ENCODE measurements at regions of chr4 and their contacts with region 1.

Region 1: GRCh38 chr4:183471946-183472708 is 27.7 kb downstream of the CDKN2AIP start:
- DNase-seq: peak; percentile 77
- ATAC-seq: peak; percentile 53
- H3K4me3 ChIP-seq: no peak overlapping the region
- H3K4me3 Mint-ChIP-seq: no peak overlapping the region
- H3K27ac ChIP-seq: no peak overlapping the region
- H3K27ac Mint-ChIP-seq: no peak overlapping the region
- H3K4me1 ChIP-seq: no peaks in the 10 kb centered on the region
- H3K4me1 Mint-ChIP-seq: peaks cover 5% of the 10 kb centered on the region
- H3K27me3 ChIP-seq: no peaks in the 10 kb centered on the region
- H3K27me3 Mint-ChIP-seq: no peaks in the 10 kb centered on the region
- CTCF ChIP-seq: peak; percentile 97

Region 2: GRCh38 chr4:182113779-182114178 is 1358.3 kb before region 1 on chr4:
- CTCF ChIA-PET with region 1: no interaction called
- POLR2A ChIA-PET with region 1: no interaction called
- intact Hi-C with region 1: no loop called
- DNase-seq: no peak
- ATAC-seq: no peak
- H3K4me3 ChIP-seq: no peak overlapping the region
- H3K4me3 Mint-ChIP-seq: no peak overlapping the region
- H3K27ac ChIP-seq: no peak overlapping the region
- H3K27ac Mint-ChIP-seq: no peak overlapping the region
- H3K4me1 ChIP-seq: no peaks in the 10 kb centered on the region
- H3K4me1 Mint-ChIP-seq: no peaks in the 10 kb centered on the region
- H3K27me3 ChIP-seq: no peaks in the 10 kb centered on the region
- H3K27me3 Mint-ChIP-seq: no peaks in the 10 kb centered on the region
- CTCF ChIP-seq: no peak

Region 3: DNA sequence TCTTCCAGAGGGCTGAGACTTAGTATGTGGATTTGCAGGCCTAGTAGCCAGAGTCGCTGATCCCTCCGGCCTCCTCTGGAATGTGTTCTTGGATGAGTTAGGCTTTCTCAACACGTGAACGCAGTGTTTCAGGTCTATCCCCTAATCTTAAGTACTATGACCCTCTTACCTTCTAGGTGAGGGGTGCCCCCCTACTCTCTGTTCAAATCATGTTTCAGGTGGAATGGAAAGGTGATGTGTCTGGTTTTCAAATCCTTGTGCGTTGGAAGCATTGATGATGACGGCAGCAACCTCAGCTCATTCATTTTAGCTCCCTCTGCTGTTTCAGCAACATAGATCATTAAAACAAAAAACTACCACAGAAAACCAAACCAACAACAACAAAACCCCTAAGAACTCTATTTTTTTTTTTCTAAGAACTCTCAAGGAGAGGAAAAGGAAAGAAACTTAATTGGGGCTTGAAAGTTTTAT is 130.5 kb after region 1 on chr4:
- CTCF ChIA-PET with region 1: interaction called, 10 read pairs
- POLR2A ChIA-PET with region 1: no interaction called
- intact Hi-C with region 1: loop called (anchors 1 kb)
- DNase-seq: no peak
- ATAC-seq: no peak
- H3K4me3 ChIP-seq: no peak overlapping the region
- H3K4me3 Mint-ChIP-seq: no peak overlapping the region
- H3K27ac ChIP-seq: no peak overlapping the region
- H3K27ac Mint-ChIP-seq: no peak overlapping the region
- H3K4me1 ChIP-seq: no peaks in the 10 kb centered on the region
- H3K4me1 Mint-ChIP-seq: no peaks in the 10 kb centered on the region
- H3K27me3 ChIP-seq: no peaks in the 10 kb centered on the region
- H3K27me3 Mint-ChIP-seq: peaks cover 11% of the 10 kb centered on the region
- CTCF ChIP-seq: no peak

Region 4: DNA sequence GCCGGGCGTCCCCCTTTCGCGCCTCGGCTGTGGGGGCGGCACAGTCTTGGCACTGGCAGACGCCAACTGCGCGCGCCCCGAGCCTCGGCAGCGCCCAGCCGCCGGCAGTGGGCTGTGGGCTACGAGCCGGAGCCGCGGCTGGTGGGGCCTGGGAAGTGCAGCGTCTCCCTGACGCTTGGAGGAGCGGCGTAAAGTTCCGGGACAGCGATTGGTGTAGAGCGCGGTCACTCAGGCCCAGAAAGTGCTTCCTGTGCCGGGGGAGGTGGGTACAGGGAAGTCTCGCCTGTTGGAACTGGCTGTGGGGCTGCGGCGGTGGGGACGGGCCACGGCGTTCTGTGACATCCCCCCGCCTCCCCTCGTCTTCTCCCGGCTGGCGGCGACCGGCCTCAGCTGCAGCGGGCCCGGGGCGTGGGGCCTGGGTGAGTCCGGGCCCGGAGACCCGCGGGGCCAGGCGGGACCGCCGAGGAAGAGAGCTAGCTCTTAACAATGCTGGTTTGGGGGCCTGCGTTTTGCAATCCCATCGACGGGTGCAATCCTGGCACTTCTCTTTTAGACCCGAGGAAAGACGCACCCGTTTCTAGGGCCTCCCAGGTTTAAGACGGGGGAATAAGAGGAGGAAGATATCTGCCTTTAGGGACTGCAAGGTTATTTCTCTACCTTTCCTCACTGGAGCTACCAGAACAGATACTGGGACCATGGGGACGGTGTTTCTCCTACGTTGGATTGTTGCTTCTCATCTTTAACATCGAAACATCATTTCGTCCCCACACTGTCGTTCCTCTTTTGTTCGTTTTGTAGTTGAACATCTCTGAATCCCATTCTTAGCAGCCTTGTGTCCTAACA is 187.1 kb after region 1 on chr4 and contains the starts of genes RWDD4 and TRAPPC11:
- CTCF ChIA-PET with region 1: no interaction called
- POLR2A ChIA-PET with region 1: no interaction called
- intact Hi-C with region 1: loop called (anchors 2 kb)
- DNase-seq: peak; percentile 97
- ATAC-seq: peak; percentile 98
- H3K4me3 ChIP-seq: peak within 1 kb of the TSS; percentile 62 to 91 (median 87)
- H3K4me3 Mint-ChIP-seq: peak within 1 kb of the TSS; percentile 93
- H3K27ac ChIP-seq: peak within 1 kb of the TSS; percentile 70 to 90
- H3K27ac Mint-ChIP-seq: peak within 1 kb of the TSS; percentile 93
- H3K4me1 ChIP-seq: peaks cover 17 to 24% of the 10 kb centered on the region in 2 donors
- H3K4me1 Mint-ChIP-seq: peaks cover 26% of the 10 kb centered on the region
- H3K27me3 ChIP-seq: no peaks in the 10 kb centered on the region
- H3K27me3 Mint-ChIP-seq: no peaks in the 10 kb centered on the region
- CTCF ChIP-seq: no peak
- total RNA-seq, gene RWDD4: 15.7 and 16.3 TPM in 2 replicates
- total RNA-seq, gene TRAPPC11: 53.8 and 56.6 TPM in 2 replicates

Region 5: DNA sequence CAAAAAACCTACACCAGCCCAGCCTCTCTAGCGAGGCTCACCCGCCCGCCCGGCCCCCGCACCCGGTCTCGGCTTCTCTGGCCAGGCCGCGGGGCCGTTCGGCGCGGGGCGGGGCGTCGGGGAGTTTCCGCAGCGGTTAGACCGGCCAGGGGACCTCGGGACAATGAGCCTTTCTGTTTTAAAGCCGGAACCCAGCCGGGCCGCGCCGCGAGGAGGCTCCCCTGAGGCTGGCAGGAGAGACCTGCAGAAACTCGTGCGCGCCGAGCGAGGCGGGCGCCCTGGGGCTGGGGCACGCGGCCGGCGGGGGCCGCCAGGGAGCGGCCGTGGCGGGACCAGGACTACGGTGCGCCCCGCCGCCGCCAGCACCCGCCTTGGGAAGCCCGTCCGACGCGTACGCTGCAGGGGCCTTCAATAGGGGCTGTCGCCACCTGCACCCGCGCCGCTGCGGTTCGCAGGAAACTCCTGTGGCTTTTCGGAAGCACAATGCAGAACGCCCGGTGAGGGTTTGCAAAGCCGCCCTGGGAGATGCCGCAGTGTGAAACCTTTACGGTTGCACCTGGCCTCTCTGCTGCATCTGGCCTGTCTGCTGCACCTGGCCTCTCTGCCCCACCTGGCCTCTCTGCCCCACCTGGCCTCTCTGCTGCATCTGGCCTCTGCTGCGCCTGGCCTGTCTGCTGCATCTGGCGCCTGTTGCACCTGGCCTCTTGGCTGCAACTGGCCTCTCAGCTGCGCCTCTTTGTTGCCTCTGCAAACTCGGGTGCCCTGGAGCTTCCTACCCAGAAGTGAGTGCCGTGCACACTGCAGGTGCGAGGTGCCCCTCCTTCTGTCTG is 250.8 kb after region 1 on chr4:
- CTCF ChIA-PET with region 1: no interaction called
- POLR2A ChIA-PET with region 1: no interaction called
- intact Hi-C with region 1: loop called (anchors 2 kb)
- DNase-seq: peak; percentile 82
- ATAC-seq: peak; percentile 61
- H3K4me3 ChIP-seq: peak overlapping the region in 4 of 5 experiments; percentile 32 to 64 (median 52)
- H3K4me3 Mint-ChIP-seq: peak overlapping the region; percentile 84
- H3K27ac ChIP-seq: no peak overlapping the region
- H3K27ac Mint-ChIP-seq: peak overlapping the region; percentile 56
- H3K4me1 ChIP-seq: peaks cover 8 to 20% of the 10 kb centered on the region in 2 donors
- H3K4me1 Mint-ChIP-seq: peaks cover 12% of the 10 kb centered on the region
- H3K27me3 ChIP-seq: peaks cover 0 to 18% (median 5%) of the 10 kb centered on the region in 4 experiments
- H3K27me3 Mint-ChIP-seq: peaks cover 21% of the 10 kb centered on the region
- CTCF ChIP-seq: no peak